Naive thymus-derived CD4-positive, alpha-beta T cell (primary cell): ENCODE measurements at regions of chr19 and their contacts with region 1.

Region 1: DNA sequence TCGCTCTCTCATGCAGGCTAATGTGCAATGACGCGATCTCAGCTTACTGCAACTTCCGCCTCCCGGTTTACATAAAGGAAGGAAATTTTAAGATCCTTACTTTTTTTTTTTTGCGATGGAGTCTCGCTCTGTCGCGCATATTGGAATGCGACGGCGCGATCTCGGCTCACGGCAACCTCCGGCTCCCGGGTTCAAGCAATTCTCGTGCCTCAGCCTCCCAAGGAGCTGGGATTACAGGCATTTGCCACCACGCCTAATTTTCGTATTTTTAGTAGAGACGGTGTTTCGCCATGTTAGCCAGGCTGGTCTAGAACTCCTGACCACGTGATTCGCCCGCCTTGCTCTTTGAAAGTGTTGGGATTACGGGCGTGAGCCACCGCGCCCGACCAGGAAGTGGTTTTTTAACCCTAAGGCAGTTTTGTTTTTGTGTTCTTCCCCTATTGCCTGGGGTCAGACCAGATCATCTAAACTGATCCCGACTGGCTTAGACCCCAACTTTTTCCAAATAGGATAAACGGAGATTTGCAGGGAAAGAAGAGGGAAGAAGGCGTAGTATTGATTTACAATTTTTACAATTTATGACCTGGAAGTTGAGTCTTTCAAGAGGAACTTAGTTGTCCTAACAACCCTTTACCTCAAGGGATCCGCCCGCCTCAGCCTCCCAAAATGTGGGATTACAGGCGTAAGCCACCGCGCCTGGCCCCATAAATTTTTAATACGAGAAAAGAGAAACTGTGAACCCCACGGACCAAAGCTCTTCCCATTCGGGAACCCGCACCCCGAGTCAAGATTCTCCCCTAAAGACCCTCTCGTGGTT is 142.0 kb downstream of the ZNF737 start:
- DNase-seq: peak in 7 of 9 donors; percentile 17 to 30 (median 24)
- ATAC-seq: no peak
- H3K4me3 ChIP-seq: peak overlapping the region; percentile 91
- H3K4me3 Mint-ChIP-seq: peak overlapping the region; percentile 89 to 98 (median 93)
- H3K27ac ChIP-seq: peak overlapping the region; percentile 72
- H3K27ac Mint-ChIP-seq: peak overlapping the region; percentile 51 to 96 (median 89)
- H3K4me1 ChIP-seq: peaks cover 0 to 3% of the 10 kb centered on the region in 2 donors
- H3K4me1 Mint-ChIP-seq: peaks cover 4 to 29% (median 16%) of the 10 kb centered on the region in 7 donors
- H3K27me3 ChIP-seq: no peaks in the 10 kb centered on the region
- H3K27me3 Mint-ChIP-seq: no peaks in the 10 kb centered on the region

Region 2: DNA sequence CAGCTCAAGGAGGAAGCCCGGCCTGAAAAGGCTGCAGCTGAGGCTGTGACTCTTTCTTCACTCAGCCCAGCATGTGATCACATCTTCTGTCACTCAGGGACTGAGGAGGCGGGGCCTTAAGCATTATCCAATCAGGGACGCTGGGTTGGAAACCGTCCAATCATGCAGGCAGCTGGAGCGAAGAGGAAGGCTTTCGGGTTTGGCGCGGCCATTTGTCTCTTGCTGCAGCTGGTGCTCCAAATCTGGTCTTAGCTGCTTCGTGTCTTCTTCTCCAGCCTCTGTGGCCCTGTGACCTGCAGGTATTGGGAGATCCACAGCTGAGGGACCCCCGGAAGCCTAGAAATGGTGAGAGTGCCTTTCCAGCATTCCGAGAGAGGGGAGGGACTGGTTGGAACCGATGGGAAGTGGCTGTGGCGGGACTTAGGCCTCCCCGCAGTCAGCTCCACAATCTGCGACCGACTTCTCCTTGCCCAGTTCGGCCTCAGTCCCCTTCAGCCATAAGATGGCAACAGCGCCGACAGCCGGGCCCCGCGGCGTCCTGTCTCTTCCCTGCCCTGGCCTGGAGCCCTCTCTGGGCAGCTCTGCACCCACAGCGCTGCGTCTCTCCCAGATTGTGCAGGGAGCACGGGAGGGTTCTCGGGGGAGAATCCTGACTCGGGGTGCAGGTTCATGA is 345.7 kb before region 1 on chr19 and contains the start of gene ZNF90:
- CTCF ChIA-PET with region 1: no interaction called
- POLR2A ChIA-PET with region 1: no interaction called
- intact Hi-C with region 1: loop called in 1 of 2 experiments (anchors 10 kb)
- DNase-seq: peak; percentile 57 to 90 (median 84)
- ATAC-seq: peak; percentile 99
- H3K4me3 ChIP-seq: peak within 1 kb of the TSS; percentile 86
- H3K4me3 Mint-ChIP-seq: peak within 1 kb of the TSS; percentile 86 to 89 (median 88)
- H3K27ac ChIP-seq: no peak within 1 kb of the TSS
- H3K27ac Mint-ChIP-seq: peak within 1 kb of the TSS; percentile 31 to 82 (median 54)
- H3K4me1 ChIP-seq: peaks cover 4 to 8% of the 10 kb centered on the region in 2 donors
- H3K4me1 Mint-ChIP-seq: peaks cover 0 to 27% (median 14%) of the 10 kb centered on the region in 7 donors
- H3K27me3 ChIP-seq: no peaks in the 10 kb centered on the region
- H3K27me3 Mint-ChIP-seq: no peaks in the 10 kb centered on the region
- total RNA-seq, gene ZNF90: 3.4 to 7.7 (median 4.5) TPM

Region 3: DNA sequence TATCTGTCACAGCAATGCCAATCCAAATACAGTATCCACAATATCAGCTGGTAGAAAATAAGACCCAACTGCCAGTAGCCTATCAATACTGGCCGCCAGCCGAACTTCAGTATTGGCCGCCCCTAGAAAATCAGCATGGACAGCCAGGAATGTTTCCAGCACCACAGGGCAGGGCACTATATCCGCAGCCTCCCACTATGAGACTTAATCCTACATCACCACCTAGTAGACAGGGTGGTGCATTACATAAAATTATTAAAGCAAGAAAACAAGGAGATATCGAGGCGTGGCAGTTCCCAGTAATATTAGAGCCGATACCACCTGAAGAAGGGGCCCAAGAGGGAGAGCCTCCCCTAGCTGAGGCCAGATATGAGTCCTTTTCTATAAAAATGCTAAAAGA is 145.2 kb before region 1 on chr19:
- CTCF ChIA-PET with region 1: no interaction called
- POLR2A ChIA-PET with region 1: no interaction called
- intact Hi-C with region 1: no loop called
- DNase-seq: peak in 2 of 9 donors; percentile 17 to 65
- ATAC-seq: no peak
- H3K4me3 ChIP-seq: no peak overlapping the region
- H3K4me3 Mint-ChIP-seq: no peak overlapping the region
- H3K27ac ChIP-seq: no peak overlapping the region
- H3K27ac Mint-ChIP-seq: no peak overlapping the region
- H3K4me1 ChIP-seq: no peaks in the 10 kb centered on the region
- H3K4me1 Mint-ChIP-seq: no peaks in the 10 kb centered on the region
- H3K27me3 ChIP-seq: no peaks in the 10 kb centered on the region
- H3K27me3 Mint-ChIP-seq: peaks cover 0 to 4% (median 0%) of the 10 kb centered on the region in 5 donors

Region 4: GRCh38 chr19:20565321-20566018 is 141.9 kb after region 1 on chr19 and contains the start of gene ZNF737:
- CTCF ChIA-PET with region 1: no interaction called
- POLR2A ChIA-PET with region 1: interaction called, 8 read pairs
- intact Hi-C with region 1: loop called in 1 of 2 experiments (anchors 1 kb)
- DNase-seq: peak; percentile 78 to 95 (median 89)
- ATAC-seq: peak; percentile 97
- H3K4me3 ChIP-seq: peak within 1 kb of the TSS; percentile 92
- H3K4me3 Mint-ChIP-seq: peak within 1 kb of the TSS; percentile 94 to 100 (median 99)
- H3K27ac ChIP-seq: peak within 1 kb of the TSS; percentile 82
- H3K27ac Mint-ChIP-seq: peak within 1 kb of the TSS; percentile 94 to 99 (median 97)
- H3K4me1 ChIP-seq: no peaks in the 10 kb centered on the region
- H3K4me1 Mint-ChIP-seq: peaks cover 0 to 39% (median 37%) of the 10 kb centered on the region in 7 donors
- H3K27me3 ChIP-seq: no peaks in the 10 kb centered on the region
- H3K27me3 Mint-ChIP-seq: no peaks in the 10 kb centered on the region
- total RNA-seq, gene ZNF737: 13.3 to 43.2 (median 14.9) TPM

Region 5: DNA sequence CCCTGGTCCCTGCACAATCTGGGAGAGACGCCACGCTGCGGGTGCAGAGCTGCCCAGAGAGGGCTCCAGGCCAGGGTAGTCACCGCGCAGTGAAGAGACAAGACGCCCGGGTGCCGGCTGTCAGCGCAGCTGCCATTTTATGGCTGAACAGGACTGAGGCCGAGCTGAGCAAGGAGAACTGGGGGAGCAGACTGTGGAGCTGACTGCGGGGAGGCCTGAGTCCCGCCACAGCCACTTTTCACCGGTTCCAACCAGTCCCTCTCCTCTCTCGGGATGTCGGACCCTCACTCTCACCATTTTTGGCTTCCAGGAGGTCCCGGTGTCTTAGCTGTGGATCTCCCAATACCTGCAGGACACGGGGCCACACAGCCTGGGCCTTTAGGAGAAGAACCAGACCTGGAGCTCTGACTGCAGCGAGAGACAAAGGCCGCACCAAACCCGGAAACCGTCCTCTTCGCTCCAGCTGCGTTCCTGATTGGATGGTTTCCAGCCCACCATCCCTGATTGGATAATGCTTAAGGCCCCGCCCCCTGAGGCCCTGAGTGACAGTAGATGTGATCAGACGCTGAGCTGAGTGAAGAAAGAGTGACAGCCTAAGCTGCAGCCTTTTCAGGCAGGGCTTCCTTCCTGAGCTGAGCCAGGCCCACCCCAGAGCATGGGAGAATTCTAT is 237.7 kb after region 1 on chr19 and contains the start of gene ZNF626:
- CTCF ChIA-PET with region 1: no interaction called
- POLR2A ChIA-PET with region 1: interaction called, 5 read pairs
- intact Hi-C with region 1: loop called in 1 of 2 experiments (anchors 1 kb)
- DNase-seq: peak; percentile 66 to 92 (median 87)
- ATAC-seq: peak; percentile 99
- H3K4me3 ChIP-seq: peak within 1 kb of the TSS; percentile 89
- H3K4me3 Mint-ChIP-seq: peak within 1 kb of the TSS; percentile 83 to 97 (median 92)
- H3K27ac ChIP-seq: peak within 1 kb of the TSS; percentile 91
- H3K27ac Mint-ChIP-seq: peak within 1 kb of the TSS; percentile 86 to 97 (median 95)
- H3K4me1 ChIP-seq: peaks cover 0 to 6% of the 10 kb centered on the region in 2 donors
- H3K4me1 Mint-ChIP-seq: peaks cover 0 to 54% (median 47%) of the 10 kb centered on the region in 7 donors
- H3K27me3 ChIP-seq: no peaks in the 10 kb centered on the region
- H3K27me3 Mint-ChIP-seq: no peaks in the 10 kb centered on the region
- total RNA-seq, gene ZNF626: 2.2 to 20.0 (median 12.4) TPM

Region 6: GRCh38 chr19:21082011-21082975 is 658.7 kb after region 1 on chr19 and contains the start of gene ZNF714:
- CTCF ChIA-PET with region 1: no interaction called
- POLR2A ChIA-PET with region 1: interaction called, 4 read pairs
- intact Hi-C with region 1: loop called in 1 of 2 experiments (anchors 10 kb)
- DNase-seq: peak; percentile 55 to 90 (median 80)
- ATAC-seq: peak; percentile 100
- H3K4me3 ChIP-seq: peak within 1 kb of the TSS; percentile 92
- H3K4me3 Mint-ChIP-seq: peak within 1 kb of the TSS; percentile 91 to 100 (median 99)
- H3K27ac ChIP-seq: peak within 1 kb of the TSS; percentile 74
- H3K27ac Mint-ChIP-seq: peak within 1 kb of the TSS; percentile 85 to 99 (median 95)
- H3K4me1 ChIP-seq: no peaks in the 10 kb centered on the region
- H3K4me1 Mint-ChIP-seq: peaks cover 3 to 24% (median 18%) of the 10 kb centered on the region in 7 donors
- H3K27me3 ChIP-seq: no peaks in the 10 kb centered on the region
- H3K27me3 Mint-ChIP-seq: no peaks in the 10 kb centered on the region
- total RNA-seq, gene ZNF714: 7.4 to 22.3 (median 13.3) TPM